Aorta (tissue), 5 donors: ENCODE measurements at regions of chr7 and their contacts with region 1.

Region 1: DNA sequence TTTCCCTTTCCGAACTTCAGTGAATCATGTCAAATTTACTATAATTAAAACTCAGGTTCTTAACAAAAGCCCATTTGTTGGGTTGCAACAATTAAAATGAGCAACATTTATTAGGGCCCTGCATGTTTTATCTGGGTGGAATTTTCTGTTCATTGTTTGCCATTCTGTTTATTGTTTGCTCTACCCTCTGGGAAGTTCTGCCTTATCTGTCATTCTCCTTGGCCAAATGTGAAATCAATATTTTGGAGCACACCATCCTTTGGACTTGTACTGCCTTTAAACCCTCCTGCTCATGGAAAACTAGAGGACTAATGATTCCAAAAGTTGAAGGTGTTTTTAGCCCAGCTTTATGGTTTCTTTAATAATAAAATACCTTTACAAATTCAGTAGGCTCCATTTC is 134.5 kb upstream of the KCND2 start:
- DNase-seq: no peak
- ATAC-seq: no peak
- H3K4me3 ChIP-seq: no peak overlapping the region
- H3K27ac ChIP-seq: no peak overlapping the region
- H3K4me1 ChIP-seq: no peaks in the 10 kb centered on the region
- H3K27me3 ChIP-seq: no peaks in the 10 kb centered on the region

Region 2: GRCh38 chr7:120272261-120272660 is 133.8 kb after region 1 on chr7:
- intact Hi-C with region 1: loop called in 1 of 2 experiments (anchors 10 kb)
- DNase-seq: no peak
- ATAC-seq: peak; percentile 77
- H3K4me3 ChIP-seq: peak overlapping the region; percentile 35 to 72
- H3K27ac ChIP-seq: no peak overlapping the region
- H3K4me1 ChIP-seq: no peaks in the 10 kb centered on the region
- H3K27me3 ChIP-seq: peaks cover 0 to 2% of the 10 kb centered on the region in 2 donors